GM18951 (cell line): ENCODE measurements at regions of chr5 and their contacts with region 1.

Region 1: GRCh38 chr5:62354028-62354874 is 48.2 kb downstream of the KIF2A start:
- POLR2A ChIP-seq: no peak

Region 2: GRCh38 chr5:61790678-61791077 is 563.6 kb before region 1 on chr5:
- in situ Hi-C with region 1: no loop called
- POLR2A ChIP-seq: no peak

Region 3: GRCh38 chr5:62214701-62215100 is 139.6 kb before region 1 on chr5:
- in situ Hi-C with region 1: loop called (anchors 5 kb)
- POLR2A ChIP-seq: no peak

Region 4: GRCh38 chr5:62606878-62607277 is 252.6 kb after region 1 on chr5:
- in situ Hi-C with region 1: no loop called
- POLR2A ChIP-seq: no peak